IMR-90 (cell line): ENCODE measurements at regions of chrX and their contacts with region 1.

Region 1: GRCh38 chrX:132488819-132489577 is at the start of gene MBNL3:
- DNase-seq: peak; percentile 5
- ATAC-seq: peak; percentile 88
- H3K4me3 ChIP-seq: peak within 1 kb of the TSS; percentile 46
- H3K27ac ChIP-seq: no peak within 1 kb of the TSS
- H3K4me1 ChIP-seq: no peaks in the 10 kb centered on the region
- H3K27me3 ChIP-seq: peaks cover 19% of the 10 kb centered on the region
- CTCF ChIP-seq: no peak
- POLR2A ChIP-seq: no peak
- RAD21 ChIP-seq: no peak
- total RNA-seq, gene MBNL3: 1.1 TPM in 2 replicates

Region 2: GRCh38 chrX:131792789-131793462 is 696.1 kb before region 1 on chrX:
- CTCF ChIA-PET with region 1: no interaction called
- POLR2A ChIA-PET with region 1: no interaction called
- dilution Hi-C with region 1: no loop called
- in situ Hi-C with region 1: no loop called
- intact Hi-C with region 1: no loop called
- DNase-seq: peak; percentile 93
- ATAC-seq: peak; percentile 86
- H3K4me3 ChIP-seq: peak overlapping the region; percentile 47
- H3K27ac ChIP-seq: peak overlapping the region; percentile 69; the same call in 1 of the 2 replicates
- H3K4me1 ChIP-seq: no peaks in the 10 kb centered on the region
- H3K27me3 ChIP-seq: peaks cover 7% of the 10 kb centered on the region
- CTCF ChIP-seq: peak; percentile 66
- POLR2A ChIP-seq: no peak
- RAD21 ChIP-seq: peak; percentile 76

Region 3: DNA sequence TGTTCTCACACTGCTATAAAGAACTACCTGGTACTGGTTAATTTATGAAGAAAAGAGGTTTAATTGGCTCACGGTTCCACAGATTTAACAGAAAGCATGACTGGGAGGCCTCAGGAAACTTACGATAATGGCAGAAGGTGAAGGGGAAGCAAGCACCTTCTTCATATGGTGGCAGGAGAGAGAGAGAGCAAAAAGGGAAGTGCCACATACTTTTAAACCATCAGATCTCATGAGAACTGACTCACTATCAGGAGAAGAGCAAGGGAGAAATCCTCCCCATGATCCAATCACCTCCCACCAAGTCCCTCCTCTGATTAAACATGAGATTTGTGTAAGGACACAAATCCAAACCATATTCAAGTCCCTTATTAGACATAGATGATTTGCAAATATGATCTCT is 257.4 kb before region 1 on chrX:
- CTCF ChIA-PET with region 1: no interaction called
- POLR2A ChIA-PET with region 1: no interaction called
- dilution Hi-C with region 1: no loop called
- in situ Hi-C with region 1: no loop called
- intact Hi-C with region 1: loop called (anchors 5 kb)
- DNase-seq: no peak
- ATAC-seq: no peak
- H3K4me3 ChIP-seq: no peak overlapping the region
- H3K27ac ChIP-seq: no peak overlapping the region
- H3K4me1 ChIP-seq: peaks cover 2% of the 10 kb centered on the region; the same call in 1 of the 2 replicates
- H3K27me3 ChIP-seq: peaks cover 2% of the 10 kb centered on the region; the same call in 1 of the 2 replicates
- CTCF ChIP-seq: no peak
- POLR2A ChIP-seq: no peak
- RAD21 ChIP-seq: no peak

Region 4: GRCh38 chrX:132590350-132591026 is 101.5 kb after region 1 on chrX:
- CTCF ChIA-PET with region 1: no interaction called
- POLR2A ChIA-PET with region 1: no interaction called
- dilution Hi-C with region 1: no loop called
- in situ Hi-C with region 1: no loop called
- intact Hi-C with region 1: no loop called
- DNase-seq: no peak
- ATAC-seq: no peak
- H3K4me3 ChIP-seq: no peak overlapping the region
- H3K27ac ChIP-seq: no peak overlapping the region
- H3K4me1 ChIP-seq: no peaks in the 10 kb centered on the region
- H3K27me3 ChIP-seq: peaks cover 4% of the 10 kb centered on the region; the same call in 1 of the 2 replicates
- CTCF ChIP-seq: no peak
- POLR2A ChIP-seq: no peak
- RAD21 ChIP-seq: no peak